B cell (primary cell): ENCODE measurements at regions of chr1 and their contacts with region 1.

Region 1: GRCh38 chr1:43946236-43947060 is at the start of gene IPO13:
- DNase-seq: peak; percentile 98
- ATAC-seq: peak; percentile 94
- H3K4me3 ChIP-seq: peak within 1 kb of the TSS; percentile 64 to 90 (median 78)
- H3K4me3 Mint-ChIP-seq: peak within 1 kb of the TSS; percentile 93
- H3K27ac ChIP-seq: peak within 1 kb of the TSS; percentile 95
- H3K27ac Mint-ChIP-seq: peak within 1 kb of the TSS; percentile 98
- H3K4me1 ChIP-seq: peaks cover 15 to 25% of the 10 kb centered on the region in 2 donors
- H3K4me1 Mint-ChIP-seq: peaks cover 39% of the 10 kb centered on the region
- H3K27me3 ChIP-seq: no peaks in the 10 kb centered on the region
- H3K27me3 Mint-ChIP-seq: no peaks in the 10 kb centered on the region
- CTCF ChIP-seq: peak; percentile 71
- total RNA-seq, gene IPO13: 17.1 and 19.7 TPM in 2 replicates

Region 2: DNA sequence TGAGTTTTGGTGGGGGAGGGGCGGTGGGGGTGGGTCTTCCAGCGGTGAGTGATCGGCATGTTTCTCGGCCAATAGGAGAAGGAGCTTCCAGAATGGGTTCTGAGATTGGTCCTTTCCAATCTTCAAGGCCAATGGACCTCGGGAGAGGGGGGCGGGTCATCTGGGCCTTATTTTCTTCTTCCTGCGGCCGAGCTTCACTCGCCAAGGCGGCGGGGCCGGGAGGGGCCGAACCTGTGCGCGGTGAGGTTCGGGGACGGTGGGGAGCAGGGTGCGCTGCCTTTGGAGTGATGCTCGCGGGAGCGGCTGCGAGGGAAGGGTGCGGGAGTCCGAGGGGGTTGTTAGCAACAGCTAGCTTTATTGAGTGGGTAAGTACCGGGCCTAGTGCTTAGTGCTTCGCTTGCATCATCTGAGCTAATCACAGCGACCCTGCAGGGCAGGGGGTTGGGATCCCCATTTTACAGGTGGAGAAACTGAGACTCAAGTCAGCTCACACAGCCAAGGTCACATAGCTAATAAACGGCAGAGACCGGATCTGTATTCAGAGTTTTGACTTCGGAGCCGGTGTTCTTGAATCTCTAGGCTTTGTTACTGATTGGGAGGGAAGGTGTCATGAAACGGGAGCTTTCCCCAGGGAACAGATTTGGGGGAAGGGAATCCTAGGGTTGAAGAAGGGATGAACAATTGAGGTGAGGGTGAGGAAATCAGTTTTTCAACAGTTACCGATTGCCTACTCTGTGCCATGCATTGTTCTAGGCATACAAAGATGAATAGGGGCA is 295.9 kb before region 1 on chr1:
- CTCF ChIA-PET with region 1: no interaction called
- POLR2A ChIA-PET with region 1: interaction called, 3 read pairs
- intact Hi-C with region 1: loop called (anchors 2 kb)
- DNase-seq: peak; percentile 97
- ATAC-seq: peak; percentile 77
- H3K4me3 ChIP-seq: peak overlapping the region; percentile 82 to 98 (median 92)
- H3K4me3 Mint-ChIP-seq: peak overlapping the region; percentile 92
- H3K27ac ChIP-seq: peak overlapping the region; percentile 84 to 86
- H3K27ac Mint-ChIP-seq: peak overlapping the region; percentile 94
- H3K4me1 ChIP-seq: peaks cover 23 to 25% of the 10 kb centered on the region in 2 donors
- H3K4me1 Mint-ChIP-seq: peaks cover 45% of the 10 kb centered on the region
- H3K27me3 ChIP-seq: no peaks in the 10 kb centered on the region
- H3K27me3 Mint-ChIP-seq: peaks cover under 1% of the 10 kb centered on the region
- CTCF ChIP-seq: no peak

Region 3: GRCh38 chr1:43763497-43763973 is 182.9 kb before region 1 on chr1:
- CTCF ChIA-PET with region 1: interaction called, 8 read pairs
- POLR2A ChIA-PET with region 1: no interaction called
- intact Hi-C with region 1: loop called (anchors 5 kb)
- DNase-seq: peak; percentile 66
- ATAC-seq: peak; percentile 60
- H3K4me3 ChIP-seq: no peak overlapping the region
- H3K4me3 Mint-ChIP-seq: no peak overlapping the region
- H3K27ac ChIP-seq: no peak overlapping the region
- H3K27ac Mint-ChIP-seq: no peak overlapping the region
- H3K4me1 ChIP-seq: no peaks in the 10 kb centered on the region
- H3K4me1 Mint-ChIP-seq: peaks cover 2% of the 10 kb centered on the region
- H3K27me3 ChIP-seq: no peaks in the 10 kb centered on the region
- H3K27me3 Mint-ChIP-seq: no peaks in the 10 kb centered on the region
- CTCF ChIP-seq: peak; percentile 77

Region 4: DNA sequence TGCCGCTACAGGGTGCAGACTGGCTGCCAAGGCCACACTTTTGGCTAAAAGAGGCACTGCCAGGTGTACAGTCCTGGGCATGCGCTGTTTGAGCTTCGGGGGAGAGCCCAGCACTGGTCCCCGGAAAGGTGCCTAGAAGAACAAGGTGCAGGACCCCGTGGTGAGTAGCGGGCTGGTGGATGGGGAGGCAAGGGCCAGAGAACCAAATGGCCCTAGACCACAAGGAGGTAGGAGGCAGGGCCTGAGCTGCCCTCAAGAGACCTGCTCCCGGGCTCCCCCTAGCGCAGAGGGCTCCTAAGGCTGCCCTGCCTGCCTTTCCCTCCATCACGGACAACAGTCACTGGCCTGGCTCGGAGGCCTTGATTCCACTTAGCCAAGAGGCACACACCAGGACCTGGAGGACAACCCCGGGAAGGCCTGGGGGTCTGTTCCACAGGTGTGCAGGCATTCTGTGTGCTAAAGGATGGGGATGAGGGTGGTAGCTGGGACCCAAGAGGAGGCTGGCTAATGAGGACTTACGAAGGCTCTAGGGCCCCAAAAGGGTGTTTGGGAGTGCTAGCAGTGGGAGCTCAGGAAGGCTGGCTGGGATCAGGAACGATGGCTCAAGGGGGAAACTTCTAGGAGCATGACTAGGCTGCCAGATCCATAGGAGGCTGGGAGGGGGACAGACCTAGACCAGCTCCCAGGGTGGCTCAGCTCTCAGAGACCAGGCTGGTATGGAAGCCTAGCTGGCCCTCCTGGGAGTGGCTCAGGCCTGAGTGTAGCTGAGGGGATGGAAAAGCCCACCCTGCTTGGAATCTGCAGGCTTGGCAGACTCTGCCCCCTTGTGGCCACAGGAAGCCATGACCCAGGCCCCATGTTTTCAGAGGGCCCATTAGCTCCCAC is 12.1 kb before region 1 on chr1:
- CTCF ChIA-PET with region 1: interaction called, 41 read pairs
- POLR2A ChIA-PET with region 1: no interaction called
- intact Hi-C with region 1: no loop called
- DNase-seq: peak; percentile 66
- ATAC-seq: peak; percentile 59
- H3K4me3 ChIP-seq: no peak overlapping the region
- H3K4me3 Mint-ChIP-seq: peak overlapping the region; percentile 41
- H3K27ac ChIP-seq: no peak overlapping the region
- H3K27ac Mint-ChIP-seq: no peak overlapping the region
- H3K4me1 ChIP-seq: peaks cover 29 to 30% of the 10 kb centered on the region in 2 donors
- H3K4me1 Mint-ChIP-seq: peaks cover 21% of the 10 kb centered on the region
- H3K27me3 ChIP-seq: peaks cover 0 to 44% (median 26%) of the 10 kb centered on the region in 4 experiments
- H3K27me3 Mint-ChIP-seq: peaks cover 26% of the 10 kb centered on the region
- CTCF ChIP-seq: peak; percentile 69

Region 5: GRCh38 chr1:43974443-43975248 is 28.2 kb after region 1 on chr1 and contains the start of gene ATP6V0B:
- CTCF ChIA-PET with region 1: interaction called, 10 read pairs
- POLR2A ChIA-PET with region 1: interaction called, 5 read pairs
- intact Hi-C with region 1: loop called (anchors 1 kb)
- DNase-seq: peak; percentile 95
- ATAC-seq: peak; percentile 72
- H3K4me3 ChIP-seq: peak within 1 kb of the TSS; percentile 79 to 97 (median 89)
- H3K4me3 Mint-ChIP-seq: peak within 1 kb of the TSS; percentile 97
- H3K27ac ChIP-seq: peak within 1 kb of the TSS; percentile 89 to 96
- H3K27ac Mint-ChIP-seq: peak within 1 kb of the TSS; percentile 97
- H3K4me1 ChIP-seq: peaks cover 33 to 61% of the 10 kb centered on the region in 2 donors
- H3K4me1 Mint-ChIP-seq: peaks cover 69% of the 10 kb centered on the region
- H3K27me3 ChIP-seq: no peaks in the 10 kb centered on the region
- H3K27me3 Mint-ChIP-seq: no peaks in the 10 kb centered on the region
- CTCF ChIP-seq: no peak
- total RNA-seq, gene ATP6V0B: 91.0 and 94.2 TPM in 2 replicates

Region 6: DNA sequence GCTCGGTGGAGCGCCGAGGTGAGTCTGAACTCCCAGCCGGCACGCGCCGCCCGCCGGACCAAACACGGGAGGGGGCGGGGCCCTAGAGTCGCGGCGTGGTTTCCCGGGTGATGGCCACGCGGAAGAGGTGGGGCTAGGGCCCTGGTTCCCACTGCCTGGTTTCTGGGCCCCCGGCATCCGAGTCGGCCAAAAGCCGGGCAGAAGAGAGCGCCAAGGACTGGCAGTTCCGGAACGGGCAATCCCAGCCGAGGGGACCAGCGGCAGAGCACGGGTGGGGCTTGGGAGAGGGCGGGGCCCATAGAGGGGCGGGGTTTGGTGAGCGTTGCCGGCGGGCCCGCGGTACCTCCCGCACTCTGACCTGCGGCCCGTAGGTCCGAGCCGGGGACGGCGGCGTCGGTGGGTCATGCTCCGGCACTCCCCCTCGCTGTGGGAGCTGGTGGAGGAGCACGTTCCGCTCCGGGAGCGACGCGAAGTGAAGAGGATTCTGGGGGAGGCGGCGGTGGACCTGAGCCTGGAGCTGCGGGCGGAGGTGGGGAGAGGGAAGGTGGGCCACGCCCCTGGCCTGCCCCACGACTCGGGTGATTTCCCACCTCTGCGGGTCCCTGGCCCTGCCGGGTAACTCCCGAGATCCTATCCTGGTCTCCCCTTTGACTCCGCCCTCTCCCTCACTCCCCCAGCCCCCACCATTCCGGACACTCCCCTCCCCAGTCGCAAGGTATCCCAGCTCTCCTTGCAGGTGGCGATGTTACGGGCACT is 45.2 kb after region 1 on chr1 and contains the start of gene CCDC24:
- CTCF ChIA-PET with region 1: interaction called, 4 read pairs
- POLR2A ChIA-PET with region 1: no interaction called
- intact Hi-C with region 1: loop called (anchors 1 kb)
- DNase-seq: peak; percentile 84
- ATAC-seq: peak; percentile 89
- H3K4me3 ChIP-seq: peak within 1 kb of the TSS; percentile 11 to 81 (median 72)
- H3K4me3 Mint-ChIP-seq: peak within 1 kb of the TSS; percentile 96
- H3K27ac ChIP-seq: peak within 1 kb of the TSS in 1 of 2 donors; percentile 75
- H3K27ac Mint-ChIP-seq: peak within 1 kb of the TSS; percentile 91
- H3K4me1 ChIP-seq: peaks cover 22 to 44% of the 10 kb centered on the region in 2 donors
- H3K4me1 Mint-ChIP-seq: peaks cover 38% of the 10 kb centered on the region
- H3K27me3 ChIP-seq: no peaks in the 10 kb centered on the region
- H3K27me3 Mint-ChIP-seq: no peaks in the 10 kb centered on the region
- CTCF ChIP-seq: no peak
- total RNA-seq, gene CCDC24: 18.0 and 18.4 TPM in 2 replicates

Region 7: DNA sequence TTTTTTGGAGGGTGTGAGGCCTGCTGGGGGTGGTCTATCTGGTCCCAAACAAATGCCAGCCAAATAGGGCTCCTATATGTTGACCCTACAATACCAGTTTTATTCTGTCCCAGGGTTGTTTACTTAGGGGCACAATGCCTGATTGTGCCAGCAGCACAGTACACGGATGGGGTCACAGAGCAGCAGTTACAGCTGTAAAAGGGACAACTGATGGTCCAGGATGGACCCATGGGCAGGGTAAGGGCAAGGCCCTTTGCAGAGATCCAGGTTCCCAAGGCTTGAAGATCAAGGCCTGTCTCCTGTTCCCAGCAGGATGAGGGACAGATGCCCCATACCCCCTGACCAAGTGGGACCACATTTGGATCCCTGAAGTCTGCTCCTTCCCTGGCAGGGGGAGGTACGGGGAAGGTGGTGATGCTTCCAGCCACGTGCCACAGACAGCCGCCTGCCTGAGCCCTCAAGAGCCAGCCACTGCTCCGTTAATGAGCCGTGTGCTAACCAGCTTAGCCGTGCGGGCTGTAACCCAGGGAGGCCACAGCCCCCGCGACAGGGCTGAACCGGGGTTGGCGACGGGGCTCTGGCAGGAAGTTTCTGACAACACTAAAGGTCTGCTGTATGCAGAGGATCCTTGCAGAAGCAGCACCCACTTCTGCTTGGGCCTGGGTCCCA is 66.6 kb after region 1 on chr1:
- CTCF ChIA-PET with region 1: no interaction called
- POLR2A ChIA-PET with region 1: no interaction called
- intact Hi-C with region 1: no loop called
- DNase-seq: no peak
- ATAC-seq: no peak
- H3K4me3 ChIP-seq: no peak overlapping the region
- H3K4me3 Mint-ChIP-seq: no peak overlapping the region
- H3K27ac ChIP-seq: no peak overlapping the region
- H3K27ac Mint-ChIP-seq: no peak overlapping the region
- H3K4me1 ChIP-seq: no peaks in the 10 kb centered on the region
- H3K4me1 Mint-ChIP-seq: no peaks in the 10 kb centered on the region
- H3K27me3 ChIP-seq: no peaks in the 10 kb centered on the region
- H3K27me3 Mint-ChIP-seq: peaks cover 9% of the 10 kb centered on the region
- CTCF ChIP-seq: no peak

Region 8: GRCh38 chr1:44029906-44030604 is 83.6 kb after region 1 on chr1:
- CTCF ChIA-PET with region 1: no interaction called
- POLR2A ChIA-PET with region 1: no interaction called
- intact Hi-C with region 1: loop called (anchors 1 kb)
- DNase-seq: peak; percentile 94
- ATAC-seq: peak; percentile 80
- H3K4me3 ChIP-seq: peak overlapping the region; percentile 17 to 87 (median 81)
- H3K4me3 Mint-ChIP-seq: peak overlapping the region; percentile 98
- H3K27ac ChIP-seq: peak overlapping the region; percentile 71 to 72
- H3K27ac Mint-ChIP-seq: peak overlapping the region; percentile 96
- H3K4me1 ChIP-seq: peaks cover 10 to 31% of the 10 kb centered on the region in 2 donors
- H3K4me1 Mint-ChIP-seq: peaks cover 37% of the 10 kb centered on the region
- H3K27me3 ChIP-seq: peaks cover 0 to 4% (median 0%) of the 10 kb centered on the region in 4 experiments
- H3K27me3 Mint-ChIP-seq: no peaks in the 10 kb centered on the region
- CTCF ChIP-seq: no peak